PC-9 (cell line): ENCODE measurements at regions of chr16 and their contacts with region 1.

Region 1: DNA sequence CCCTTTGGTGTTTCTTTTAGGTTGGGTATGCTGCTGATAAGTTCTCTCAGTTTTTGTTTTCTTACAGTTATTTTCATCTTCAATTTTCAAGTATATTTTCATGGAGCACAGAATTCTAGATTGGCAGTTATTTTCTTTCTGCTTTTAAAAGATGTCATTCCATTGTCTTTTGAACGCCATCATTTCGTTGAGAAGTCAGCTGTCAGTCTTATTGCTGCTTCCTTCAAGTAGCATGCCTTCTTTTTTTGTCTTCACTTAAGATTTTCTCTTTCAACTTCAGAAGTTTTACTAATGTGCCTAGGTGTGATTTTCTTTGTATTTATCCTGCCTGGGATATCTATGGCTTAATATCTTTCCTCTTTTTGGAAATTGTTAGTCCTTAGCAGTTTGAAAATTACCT is 262.2 kb upstream of the PMFBP1 start:
- DNase-seq: no peak
- H3K4me3 ChIP-seq: no peak overlapping the region
- H3K27ac ChIP-seq: no peak overlapping the region
- H3K4me1 ChIP-seq: no peaks in the 10 kb centered on the region
- H3K27me3 ChIP-seq: no peaks in the 10 kb centered on the region
- CTCF ChIP-seq: no peak

Region 2: GRCh38 chr16:72131036-72131435 is 303.1 kb before region 1 on chr16:
- CTCF ChIA-PET with region 1: no interaction called
- POLR2A ChIA-PET with region 1: interaction called, 24 read pairs
- intact Hi-C with region 1: no loop called
- DNase-seq: no peak
- H3K4me3 ChIP-seq: no peak overlapping the region
- H3K27ac ChIP-seq: no peak overlapping the region
- H3K4me1 ChIP-seq: no peaks in the 10 kb centered on the region
- H3K27me3 ChIP-seq: peaks cover 75% of the 10 kb centered on the region
- CTCF ChIP-seq: no peak

Region 3: DNA sequence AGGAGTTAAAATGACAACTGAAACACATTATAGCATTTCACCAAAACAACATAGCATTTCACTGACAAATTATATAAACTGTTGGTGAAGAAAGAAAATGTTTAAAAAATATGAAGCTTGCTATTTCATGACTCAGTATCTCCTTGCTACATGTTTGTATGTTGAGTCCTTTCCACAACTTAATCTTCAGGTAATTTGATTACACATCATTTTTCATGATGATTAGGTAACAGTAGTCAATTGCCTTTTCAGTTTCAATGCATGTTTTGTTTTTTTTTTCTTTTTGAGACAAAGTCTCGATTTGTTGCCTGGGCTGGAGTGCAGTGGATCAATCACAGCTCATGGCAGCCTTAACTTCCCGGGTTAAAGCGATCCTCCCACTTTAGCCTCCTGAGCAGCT is 84.4 kb before region 1 on chr16:
- CTCF ChIA-PET with region 1: no interaction called
- POLR2A ChIA-PET with region 1: no interaction called
- intact Hi-C with region 1: no loop called
- DNase-seq: no peak
- H3K4me3 ChIP-seq: no peak overlapping the region
- H3K27ac ChIP-seq: no peak overlapping the region
- H3K4me1 ChIP-seq: no peaks in the 10 kb centered on the region
- H3K27me3 ChIP-seq: no peaks in the 10 kb centered on the region
- CTCF ChIP-seq: no peak

Region 4: DNA sequence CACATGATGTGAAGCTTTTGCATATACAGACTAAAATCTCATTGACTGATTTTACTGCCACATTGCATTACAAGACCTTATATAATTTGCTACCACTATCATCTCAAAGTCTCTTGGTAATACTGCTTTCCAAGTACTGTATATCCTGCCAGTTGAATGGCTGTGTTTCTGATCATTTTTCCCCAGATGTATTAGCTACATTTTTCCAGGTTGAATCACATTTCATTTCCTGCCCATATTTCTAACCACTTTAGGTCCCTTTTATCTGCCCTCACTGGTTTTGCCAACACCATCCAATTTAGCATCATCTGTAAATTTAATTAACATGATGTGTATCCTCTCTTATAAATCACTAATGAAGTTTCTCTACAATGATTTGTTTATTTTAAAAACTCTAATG is 103.5 kb after region 1 on chr16:
- CTCF ChIA-PET with region 1: no interaction called
- POLR2A ChIA-PET with region 1: no interaction called
- intact Hi-C with region 1: no loop called
- DNase-seq: no peak
- H3K4me3 ChIP-seq: no peak overlapping the region
- H3K27ac ChIP-seq: no peak overlapping the region
- H3K4me1 ChIP-seq: no peaks in the 10 kb centered on the region
- H3K27me3 ChIP-seq: no peaks in the 10 kb centered on the region
- CTCF ChIP-seq: no peak